AG04450 (cell line): ENCODE measurements at regions of chr12 and their contacts with region 1.

Region 1: GRCh38 chr12:12786716-12787601 is 1.5 kb downstream of the APOLD1 start:
- DNase-seq: no peak
- H3K4me3 ChIP-seq: peak overlapping the region; percentile 63
- H3K27ac ChIP-seq: peak overlapping the region; percentile 84
- H3K27me3 ChIP-seq: no peaks in the 10 kb centered on the region
- CTCF ChIP-seq: no peak

Region 2: GRCh38 chr12:12582193-12582881 is 204.6 kb before region 1 on chr12:
- CTCF ChIA-PET with region 1: no interaction called
- POLR2A ChIA-PET with region 1: no interaction called
- DNase-seq: no peak
- H3K4me3 ChIP-seq: no peak overlapping the region
- H3K27ac ChIP-seq: no peak overlapping the region
- H3K27me3 ChIP-seq: peaks cover 3% of the 10 kb centered on the region
- CTCF ChIP-seq: no peak

Region 3: DNA sequence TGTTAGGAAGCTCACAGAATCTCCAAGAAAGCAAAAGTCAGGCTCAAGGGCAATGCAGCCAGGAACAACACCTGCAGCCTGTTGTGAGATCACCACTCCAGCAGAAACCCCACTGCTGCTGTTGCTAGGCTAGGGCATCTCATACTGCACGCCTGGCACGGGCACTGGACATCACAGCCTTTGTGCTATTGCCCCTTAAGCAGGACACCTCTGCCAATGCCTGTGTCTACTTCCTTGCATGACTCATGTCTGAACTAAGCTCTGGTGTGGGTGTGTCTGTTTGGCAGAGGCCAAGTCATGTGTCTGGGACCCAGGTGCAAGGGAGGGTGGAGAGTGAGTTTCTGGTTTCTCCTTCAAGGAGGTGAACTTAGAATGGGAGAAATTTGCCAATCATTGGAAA is 16.2 kb after region 1 on chr12:
- CTCF ChIA-PET with region 1: interaction called, 33 read pairs
- POLR2A ChIA-PET with region 1: interaction called, 13 read pairs
- DNase-seq: no peak
- H3K4me3 ChIP-seq: no peak overlapping the region
- H3K27ac ChIP-seq: no peak overlapping the region
- H3K27me3 ChIP-seq: no peaks in the 10 kb centered on the region
- CTCF ChIP-seq: no peak

Region 4: GRCh38 chr12:12813120-12814101 is 26.5 kb after region 1 on chr12 and contains the start of gene DDX47:
- CTCF ChIA-PET with region 1: interaction called, 30 read pairs
- POLR2A ChIA-PET with region 1: interaction called, 13 read pairs
- DNase-seq: peak; percentile 74
- H3K4me3 ChIP-seq: peak within 1 kb of the TSS; percentile 91
- H3K27ac ChIP-seq: peak within 1 kb of the TSS; percentile 49
- H3K27me3 ChIP-seq: no peaks in the 10 kb centered on the region
- CTCF ChIP-seq: peak; percentile 90
- polyA plus RNA-seq, gene DDX47: 91.3 and 113 TPM in 2 replicates

Region 5: GRCh38 chr12:12819671-12820311 is 32.8 kb after region 1 on chr12:
- CTCF ChIA-PET with region 1: interaction called, 30 read pairs
- POLR2A ChIA-PET with region 1: interaction called, 8 read pairs
- DNase-seq: peak; percentile 81
- H3K4me3 ChIP-seq: no peak overlapping the region
- H3K27ac ChIP-seq: peak overlapping the region; percentile 82
- H3K27me3 ChIP-seq: no peaks in the 10 kb centered on the region
- CTCF ChIP-seq: peak; percentile 30

Region 6: GRCh38 chr12:12837025-12837872 is 50.3 kb after region 1 on chr12:
- CTCF ChIA-PET with region 1: interaction called, 13 read pairs
- POLR2A ChIA-PET with region 1: no interaction called
- DNase-seq: peak; percentile 44
- H3K4me3 ChIP-seq: no peak overlapping the region
- H3K27ac ChIP-seq: peak overlapping the region; percentile 47
- H3K27me3 ChIP-seq: no peaks in the 10 kb centered on the region
- CTCF ChIP-seq: peak; percentile 66

Region 7: DNA sequence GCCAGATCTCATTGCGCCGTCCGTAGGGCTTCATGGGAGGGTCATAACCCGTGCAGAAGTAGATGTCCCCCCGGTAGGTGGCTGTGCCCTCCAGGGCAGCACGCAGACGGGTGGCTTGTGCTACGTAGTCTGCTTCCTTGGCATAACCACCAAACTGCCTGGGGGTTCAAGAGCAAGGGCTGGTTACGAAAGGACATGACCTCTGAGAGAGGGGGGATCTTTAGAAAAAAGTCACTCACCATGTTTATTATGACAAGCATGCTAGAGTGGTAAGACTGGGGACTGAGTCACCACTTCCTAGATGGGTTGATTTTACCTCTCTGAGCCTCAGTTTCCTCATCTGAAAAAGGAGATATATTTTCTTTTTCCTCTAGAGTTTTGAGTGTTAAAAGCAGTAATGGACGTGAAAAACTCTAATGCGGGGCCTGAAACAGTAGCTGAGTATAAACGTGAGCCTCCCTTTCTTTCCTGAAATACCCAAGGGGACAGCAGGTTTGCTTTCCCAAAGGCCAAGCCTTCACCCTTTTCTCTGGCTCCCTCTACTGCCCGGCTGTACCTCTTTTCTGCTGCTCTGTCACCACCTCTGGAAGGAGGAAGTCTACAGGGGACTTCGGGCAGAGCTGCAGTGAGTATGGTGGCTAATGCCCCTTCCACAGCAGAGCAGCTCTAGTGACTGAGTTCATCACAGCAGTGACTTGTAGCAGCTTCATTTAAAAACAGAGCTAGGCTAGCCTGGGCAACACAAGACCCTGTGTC is 188.5 kb after region 1 on chr12:
- CTCF ChIA-PET with region 1: interaction called, 14 read pairs
- POLR2A ChIA-PET with region 1: no interaction called
- DNase-seq: no peak
- H3K4me3 ChIP-seq: no peak overlapping the region
- H3K27ac ChIP-seq: peak overlapping the region; percentile 73
- H3K27me3 ChIP-seq: no peaks in the 10 kb centered on the region
- CTCF ChIP-seq: peak; percentile 59

Region 8: GRCh38 chr12:12983420-12984035 is 196.6 kb after region 1 on chr12:
- CTCF ChIA-PET with region 1: interaction called, 25 read pairs
- POLR2A ChIA-PET with region 1: no interaction called
- DNase-seq: no peak
- H3K4me3 ChIP-seq: no peak overlapping the region
- H3K27ac ChIP-seq: no peak overlapping the region
- H3K27me3 ChIP-seq: no peaks in the 10 kb centered on the region
- CTCF ChIP-seq: peak; percentile 69